ENCODE measurements at regions of chr4 and their contacts with region 1.

Region 1: GRCh38 chr4:153318696-153319320 is 25.7 kb upstream of the MND1 start:
- DNase-seq: no peak
- H3K4me3 ChIP-seq: no peak overlapping the region
- H3K27ac ChIP-seq: no peak overlapping the region
- H3K4me1 ChIP-seq: peaks cover 0 to 4% (median 0%) of the 10 kb centered on the region in 4 donors
- H3K27me3 ChIP-seq: no peaks in the 10 kb centered on the region
- CTCF ChIP-seq: peak; percentile 19 to 75 (median 64)
- EP300 ChIP-seq: no peak
- POLR2A ChIP-seq: no peak

Region 2: GRCh38 chr4:153142700-153143438 is 175.9 kb before region 1 on chr4:
- intact Hi-C with region 1: loop called (anchors 1 kb)
- DNase-seq: peak; percentile 82
- H3K4me3 ChIP-seq: peak overlapping the region in 2 of 4 donors; percentile 9 to 19
- H3K27ac ChIP-seq: no peak overlapping the region
- H3K4me1 ChIP-seq: peaks cover 0 to 14% (median 4%) of the 10 kb centered on the region in 4 donors
- H3K27me3 ChIP-seq: no peaks in the 10 kb centered on the region
- CTCF ChIP-seq: peak; percentile 50 to 85 (median 82)
- EP300 ChIP-seq: no peak
- POLR2A ChIP-seq: no peak

Region 3: GRCh38 chr4:153181293-153181692 is 137.5 kb before region 1 on chr4:
- intact Hi-C with region 1: no loop called
- DNase-seq: peak; percentile 44
- H3K4me3 ChIP-seq: no peak overlapping the region
- H3K27ac ChIP-seq: no peak overlapping the region
- H3K4me1 ChIP-seq: no peaks in the 10 kb centered on the region
- H3K27me3 ChIP-seq: no peaks in the 10 kb centered on the region
- CTCF ChIP-seq: no peak
- EP300 ChIP-seq: no peak
- POLR2A ChIP-seq: no peak

Region 4: GRCh38 chr4:153204247-153205027 is 114.4 kb before region 1 on chr4 and contains the start of gene TRIM2:
- intact Hi-C with region 1: loop called (anchors 5 kb)
- DNase-seq: peak; percentile 84
- H3K4me3 ChIP-seq: peak within 1 kb of the TSS; percentile 4 to 29 (median 21)
- H3K27ac ChIP-seq: peak within 1 kb of the TSS; percentile 11 to 54 (median 31)
- H3K4me1 ChIP-seq: peaks cover 0 to 19% (median 11%) of the 10 kb centered on the region in 4 donors
- H3K27me3 ChIP-seq: no peaks in the 10 kb centered on the region
- CTCF ChIP-seq: no peak
- EP300 ChIP-seq: no peak
- POLR2A ChIP-seq: peak in 1 of 2 donors; percentile 40
- total RNA-seq, gene TRIM2: 31.6 to 51.7 (median 34.7) TPM

Region 5: DNA sequence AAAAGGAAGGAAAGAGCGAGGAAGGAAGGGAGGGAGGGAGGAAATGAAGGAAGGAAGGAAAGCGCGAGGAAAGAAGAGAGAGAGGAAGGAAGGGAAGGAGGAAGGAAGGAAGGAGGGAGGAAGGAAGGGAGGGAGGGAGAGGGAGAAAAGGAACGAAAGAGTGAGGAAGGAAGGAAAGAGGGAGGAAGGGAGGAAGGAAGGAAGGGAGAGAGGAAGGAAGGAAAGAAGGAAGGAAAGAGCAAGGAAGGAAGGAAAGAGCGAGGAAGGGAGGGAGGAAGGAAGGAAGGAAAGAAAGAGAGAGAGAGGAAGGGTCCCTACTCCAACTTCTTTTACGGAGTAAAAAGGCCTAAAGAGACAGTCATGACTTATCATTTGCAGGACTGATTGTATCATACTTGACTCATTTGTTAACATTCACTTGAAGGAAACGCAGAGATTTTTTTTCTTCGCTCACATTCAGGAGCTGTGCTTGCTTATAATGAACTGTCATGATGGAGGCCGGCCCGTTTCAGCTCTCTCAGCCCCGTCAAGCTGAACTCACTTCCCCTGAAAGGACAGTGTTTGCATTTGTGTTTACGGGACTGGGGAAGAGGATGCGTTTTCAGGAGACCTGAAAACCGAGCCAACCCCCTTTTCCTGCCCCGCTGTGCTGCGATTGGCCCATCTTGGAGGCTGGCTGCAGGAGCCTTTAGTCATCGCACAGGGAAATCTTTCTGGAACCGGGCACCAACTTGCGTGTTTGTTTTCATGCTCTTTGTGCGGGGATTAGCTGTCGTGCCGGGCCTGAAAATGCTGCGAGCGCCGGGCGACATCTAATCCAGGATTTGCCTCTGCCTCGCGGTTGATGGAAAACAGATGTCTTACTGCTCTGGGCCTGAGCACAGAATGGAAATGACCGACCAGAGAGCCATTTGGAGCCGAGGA is 96.8 kb before region 1 on chr4:
- intact Hi-C with region 1: loop called (anchors 5 kb)
- DNase-seq: peak; percentile 88
- H3K4me3 ChIP-seq: peak overlapping the region; percentile 62 to 81 (median 69)
- H3K27ac ChIP-seq: peak overlapping the region; percentile 90 to 96 (median 94)
- H3K4me1 ChIP-seq: peaks cover 0 to 31% (median 18%) of the 10 kb centered on the region in 4 donors
- H3K27me3 ChIP-seq: no peaks in the 10 kb centered on the region
- CTCF ChIP-seq: no peak
- EP300 ChIP-seq: no peak
- POLR2A ChIP-seq: peak in 1 of 2 donors; percentile 10